CD4-positive, alpha-beta T cell (primary cell): ENCODE measurements at regions of chr21 and their contacts with region 1.

Region 1: GRCh38 chr21:31180256-31181081 is 142.2 kb upstream of the KRTAP19-8 start:
- DNase-seq: peak in 4 of 14 experiments; percentile 53 to 78 (median 68)
- ATAC-seq: no peak
- H3K4me3 ChIP-seq: peak overlapping the region; percentile 46
- H3K4me3 Mint-ChIP-seq: peak overlapping the region; percentile 89
- H3K27ac ChIP-seq: peak overlapping the region; percentile 39 to 89
- H3K27ac Mint-ChIP-seq: peak overlapping the region; percentile 99
- H3K4me1 ChIP-seq: peaks cover 92% of the 10 kb centered on the region
- H3K4me1 Mint-ChIP-seq: peaks cover 79% of the 10 kb centered on the region
- H3K27me3 ChIP-seq: no peaks in the 10 kb centered on the region
- H3K27me3 Mint-ChIP-seq: no peaks in the 10 kb centered on the region
- CTCF ChIP-seq: peak; percentile 65

Region 2: GRCh38 chr21:31098576-31099005 is 81.9 kb before region 1 on chr21:
- CTCF ChIA-PET with region 1: interaction called, 18 read pairs
- POLR2A ChIA-PET with region 1: interaction called, 15 read pairs
- intact Hi-C with region 1: loop called (anchors 1 kb)
- DNase-seq: peak; percentile 53 to 86 (median 68)
- ATAC-seq: peak; percentile 89
- H3K4me3 ChIP-seq: no peak overlapping the region
- H3K4me3 Mint-ChIP-seq: no peak overlapping the region
- H3K27ac ChIP-seq: no peak overlapping the region
- H3K27ac Mint-ChIP-seq: no peak overlapping the region
- H3K4me1 ChIP-seq: peaks cover 26% of the 10 kb centered on the region
- H3K4me1 Mint-ChIP-seq: peaks cover 30% of the 10 kb centered on the region
- H3K27me3 ChIP-seq: no peaks in the 10 kb centered on the region
- H3K27me3 Mint-ChIP-seq: no peaks in the 10 kb centered on the region
- CTCF ChIP-seq: peak; percentile 93

Region 3: DNA sequence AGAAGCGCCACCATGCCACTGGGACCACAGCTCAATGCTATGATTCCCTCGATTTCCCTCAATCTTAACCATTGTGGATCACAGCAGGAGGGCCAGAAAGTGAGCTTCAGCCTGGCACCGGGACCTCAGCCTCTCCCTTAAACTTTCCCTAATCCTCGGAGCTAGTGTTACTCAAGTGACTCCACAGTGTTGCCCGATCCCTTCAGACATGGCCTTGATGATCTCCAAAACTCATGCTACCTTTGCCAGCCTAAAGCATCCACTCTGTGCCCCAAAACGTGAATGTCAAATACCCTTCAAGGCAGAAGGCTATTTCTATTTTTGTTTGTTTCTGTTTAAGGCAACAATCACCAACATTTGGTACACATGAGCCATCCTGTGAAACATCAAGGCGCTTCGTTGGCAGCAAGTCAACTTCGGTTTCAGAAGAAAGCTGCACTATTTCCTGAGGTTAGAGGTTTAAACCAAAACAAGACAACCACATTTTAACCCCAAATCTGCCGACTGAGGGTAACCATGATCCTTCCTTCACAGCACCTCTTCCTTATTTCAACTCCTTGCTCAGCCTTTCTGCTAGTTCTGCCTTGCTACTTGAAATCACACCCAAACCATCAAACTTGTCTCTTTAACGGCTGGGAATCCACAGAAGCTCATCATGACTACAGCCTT is 47.8 kb before region 1 on chr21:
- CTCF ChIA-PET with region 1: interaction called, 4 read pairs
- POLR2A ChIA-PET with region 1: interaction called, 57 read pairs
- intact Hi-C with region 1: loop called (anchors 1 to 2 kb)
- DNase-seq: peak; percentile 52 to 92 (median 71)
- ATAC-seq: peak; percentile 91
- H3K4me3 ChIP-seq: peak overlapping the region; percentile 35
- H3K4me3 Mint-ChIP-seq: peak overlapping the region; percentile 68
- H3K27ac ChIP-seq: peak overlapping the region in 1 of 2 donors; percentile 43
- H3K27ac Mint-ChIP-seq: peak overlapping the region; percentile 79
- H3K4me1 ChIP-seq: peaks cover 33% of the 10 kb centered on the region
- H3K4me1 Mint-ChIP-seq: peaks cover 64% of the 10 kb centered on the region
- H3K27me3 ChIP-seq: no peaks in the 10 kb centered on the region
- H3K27me3 Mint-ChIP-seq: no peaks in the 10 kb centered on the region
- CTCF ChIP-seq: no peak

Region 4: GRCh38 chr21:31198575-31198974 is 18.1 kb after region 1 on chr21:
- CTCF ChIA-PET with region 1: interaction called, 9 read pairs
- POLR2A ChIA-PET with region 1: interaction called, 14 read pairs
- intact Hi-C with region 1: no loop called
- DNase-seq: peak in 3 of 14 experiments; percentile 66 to 72 (median 66)
- ATAC-seq: peak; percentile 56
- H3K4me3 ChIP-seq: no peak overlapping the region
- H3K4me3 Mint-ChIP-seq: peak overlapping the region; percentile 8
- H3K27ac ChIP-seq: no peak overlapping the region
- H3K27ac Mint-ChIP-seq: peak overlapping the region; percentile 38
- H3K4me1 ChIP-seq: peaks cover 7% of the 10 kb centered on the region
- H3K4me1 Mint-ChIP-seq: peaks cover 47% of the 10 kb centered on the region
- H3K27me3 ChIP-seq: no peaks in the 10 kb centered on the region
- H3K27me3 Mint-ChIP-seq: no peaks in the 10 kb centered on the region
- CTCF ChIP-seq: peak; percentile 73

Region 5: GRCh38 chr21:31397515-31397926 is 217.1 kb after region 1 on chr21:
- CTCF ChIA-PET with region 1: no interaction called
- POLR2A ChIA-PET with region 1: no interaction called
- intact Hi-C with region 1: loop called in 1 of 2 experiments (anchors 5 kb)
- DNase-seq: no peak
- ATAC-seq: peak; percentile 8
- H3K4me3 ChIP-seq: no peak overlapping the region
- H3K4me3 Mint-ChIP-seq: peak overlapping the region; percentile 70
- H3K27ac ChIP-seq: no peak overlapping the region
- H3K27ac Mint-ChIP-seq: peak overlapping the region; percentile 90
- H3K4me1 ChIP-seq: peaks cover 36% of the 10 kb centered on the region
- H3K4me1 Mint-ChIP-seq: peaks cover 58% of the 10 kb centered on the region
- H3K27me3 ChIP-seq: no peaks in the 10 kb centered on the region
- H3K27me3 Mint-ChIP-seq: no peaks in the 10 kb centered on the region
- CTCF ChIP-seq: no peak